Cardiac septum (tissue), 1 donor: ENCODE measurements at regions of chr1 and their contacts with region 1.

Region 1: GRCh38 chr1:9376886-9377333 is 84.2 kb downstream of the SPSB1 start:
- DNase-seq: no peak

Region 2: DNA sequence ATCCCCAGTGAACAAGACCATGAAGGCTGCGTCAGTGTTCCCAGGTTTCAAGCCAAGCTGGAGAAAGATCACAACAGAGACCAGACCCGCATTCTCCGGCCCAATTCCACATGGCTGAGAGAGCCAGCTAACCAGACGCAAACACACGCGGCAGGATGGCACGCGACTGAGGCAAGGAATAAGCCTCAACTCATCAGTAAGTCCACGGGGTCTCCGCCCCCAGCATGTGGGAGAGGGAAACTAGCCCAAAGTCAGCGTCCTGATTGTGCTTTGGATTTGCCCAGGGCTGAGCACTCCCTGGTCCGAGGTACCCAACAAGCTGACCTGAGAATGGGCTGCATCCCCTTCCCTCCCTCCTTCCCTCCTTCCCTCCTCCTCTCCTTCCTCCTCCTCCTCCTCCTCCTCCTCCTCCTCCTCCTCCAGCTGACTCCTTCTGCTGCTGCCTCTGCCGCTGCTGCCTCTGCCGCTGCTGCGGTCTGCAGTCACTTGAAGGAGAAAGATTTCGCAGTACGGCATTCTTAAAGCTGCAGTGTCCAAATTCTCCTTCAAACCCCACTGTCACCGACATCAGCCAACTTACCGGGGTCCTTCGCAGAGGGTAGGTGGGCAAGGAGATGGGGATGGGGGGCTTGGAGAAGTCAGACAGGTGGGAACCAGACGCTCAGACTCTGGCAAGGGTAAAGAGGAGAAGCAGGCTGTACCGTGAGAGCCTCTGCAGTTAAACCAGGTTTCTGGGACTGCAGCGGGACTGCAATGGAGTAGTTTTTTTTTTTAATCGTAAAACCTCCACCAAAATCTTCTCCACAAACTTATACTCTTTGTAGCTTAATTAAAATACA is 175.3 kb before region 1 on chr1:
- intact Hi-C with region 1: no loop called
- DNase-seq: no peak

Region 3: GRCh38 chr1:9413148-9413876 is 36.4 kb after region 1 on chr1:
- intact Hi-C with region 1: loop called (anchors 2 kb)
- DNase-seq: no peak